ENCODE measurements at regions of chr17 and their contacts with region 1.

Region 1: GRCh38 chr17:77451245-77451893 is 310.6 kb downstream of the SEC14L1 start:
- DNase-seq: no peak
- ATAC-seq: peak; percentile 71
- H3K4me3 ChIP-seq: peak overlapping the region; percentile 94
- H3K27ac ChIP-seq: peak overlapping the region; percentile 99
- H3K4me1 ChIP-seq: peaks cover 50% of the 10 kb centered on the region
- H3K27me3 ChIP-seq: no peaks in the 10 kb centered on the region
- CTCF ChIP-seq: no peak
- EP300 ChIP-seq: no peak
- POLR2A ChIP-seq: peak; percentile 83
- RAD21 ChIP-seq: 0 out of 2 replicates have a peak, but pooled peaks have one; percentile 1

Region 2: GRCh38 chr17:77363821-77364361 is 87.5 kb before region 1 on chr17:
- CTCF ChIA-PET with region 1: no interaction called
- POLR2A ChIA-PET with region 1: no interaction called
- RAD21 ChIA-PET with region 1: no interaction called
- SMC1A ChIA-PET with region 1: no interaction called
- in situ Hi-C with region 1: no loop called
- intact Hi-C with region 1: no loop called
- DNase-seq: no peak
- ATAC-seq: no peak
- H3K4me3 ChIP-seq: no peak overlapping the region
- H3K27ac ChIP-seq: no peak overlapping the region
- H3K4me1 ChIP-seq: peaks cover 18% of the 10 kb centered on the region
- H3K27me3 ChIP-seq: no peaks in the 10 kb centered on the region
- CTCF ChIP-seq: no peak
- EP300 ChIP-seq: no peak
- POLR2A ChIP-seq: no peak
- RAD21 ChIP-seq: no peak

Region 3: DNA sequence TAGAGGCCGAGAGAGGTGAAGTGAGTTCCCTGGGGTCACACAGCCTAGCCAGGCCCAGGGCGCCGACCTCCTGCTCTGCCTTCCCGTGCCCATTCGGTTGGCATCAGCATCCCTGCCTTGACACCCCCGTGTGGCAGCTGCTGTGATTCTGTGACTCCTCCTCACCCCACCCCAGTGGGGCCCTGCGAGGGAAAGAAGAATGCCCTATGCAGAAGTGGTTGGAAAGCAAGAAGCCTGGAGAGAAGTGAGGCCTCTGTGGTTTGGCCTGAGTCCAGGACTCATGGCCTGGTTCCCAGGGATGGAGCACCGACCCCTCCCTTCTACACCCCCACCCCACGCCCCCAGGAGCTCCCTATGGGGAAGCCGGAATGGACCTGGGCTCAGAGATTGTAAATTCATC is 14.4 kb before region 1 on chr17:
- CTCF ChIA-PET with region 1: interaction called, 11 read pairs
- POLR2A ChIA-PET with region 1: interaction called, 78 read pairs
- RAD21 ChIA-PET with region 1: interaction called, 102 read pairs
- SMC1A ChIA-PET with region 1: interaction called, 46 read pairs
- in situ Hi-C with region 1: no loop called
- intact Hi-C with region 1: no loop called
- DNase-seq: no peak
- ATAC-seq: no peak
- H3K4me3 ChIP-seq: no peak overlapping the region
- H3K27ac ChIP-seq: peak overlapping the region; percentile 59; the same call in 1 of the 2 replicates
- H3K4me1 ChIP-seq: peaks cover 88% of the 10 kb centered on the region
- H3K27me3 ChIP-seq: no peaks in the 10 kb centered on the region
- CTCF ChIP-seq: 0 out of 6 replicates have a peak, but pooled peaks of 1 of the 3 experiments have one; percentile 5
- EP300 ChIP-seq: no peak
- POLR2A ChIP-seq: no peak
- RAD21 ChIP-seq: no peak

Region 4: GRCh38 chr17:77465358-77466041 is 14.1 kb after region 1 on chr17:
- CTCF ChIA-PET with region 1: interaction called, 4 read pairs
- POLR2A ChIA-PET with region 1: interaction called, 41 read pairs
- RAD21 ChIA-PET with region 1: interaction called, 62 read pairs
- SMC1A ChIA-PET with region 1: interaction called, 65 read pairs
- in situ Hi-C with region 1: no loop called
- intact Hi-C with region 1: no loop called
- DNase-seq: peak; percentile 86
- ATAC-seq: peak; percentile 82
- H3K4me3 ChIP-seq: peak overlapping the region; percentile 36; the same call in 1 of the 2 replicates
- H3K27ac ChIP-seq: peak overlapping the region; percentile 85
- H3K4me1 ChIP-seq: peaks cover 63% of the 10 kb centered on the region
- H3K27me3 ChIP-seq: no peaks in the 10 kb centered on the region
- CTCF ChIP-seq: no peak
- EP300 ChIP-seq: peak; percentile 29 to 50; a peak in 2 of 4 replicates
- POLR2A ChIP-seq: peak; percentile 48; the same call in 1 of the 2 replicates
- RAD21 ChIP-seq: no peak

Region 5: GRCh38 chr17:77471984-77472461 is 20.7 kb after region 1 on chr17:
- CTCF ChIA-PET with region 1: interaction called, 10 read pairs
- POLR2A ChIA-PET with region 1: interaction called, 41 read pairs
- RAD21 ChIA-PET with region 1: interaction called, 62 read pairs
- SMC1A ChIA-PET with region 1: interaction called, 96 read pairs
- in situ Hi-C with region 1: no loop called
- intact Hi-C with region 1: loop called (anchors 2 kb)
- DNase-seq: no peak
- ATAC-seq: peak; percentile 34
- H3K4me3 ChIP-seq: peak overlapping the region; percentile 48
- H3K27ac ChIP-seq: peak overlapping the region; percentile 90
- H3K4me1 ChIP-seq: peaks cover 63% of the 10 kb centered on the region
- H3K27me3 ChIP-seq: no peaks in the 10 kb centered on the region
- CTCF ChIP-seq: no peak
- EP300 ChIP-seq: no peak
- POLR2A ChIP-seq: no peak
- RAD21 ChIP-seq: no peak

Region 6: GRCh38 chr17:77542551-77543490 is 91.5 kb after region 1 on chr17:
- CTCF ChIA-PET with region 1: no interaction called
- POLR2A ChIA-PET with region 1: no interaction called
- RAD21 ChIA-PET with region 1: no interaction called
- SMC1A ChIA-PET with region 1: no interaction called
- in situ Hi-C with region 1: no loop called
- intact Hi-C with region 1: no loop called
- DNase-seq: peak; percentile 5
- ATAC-seq: peak; percentile 91
- H3K4me3 ChIP-seq: no peak overlapping the region
- H3K27ac ChIP-seq: no peak overlapping the region
- H3K4me1 ChIP-seq: no peaks in the 10 kb centered on the region
- H3K27me3 ChIP-seq: peaks cover 0 to 1% of the 10 kb centered on the region in 2 experiments; a peak in 2 of 4 replicates
- CTCF ChIP-seq: peak; percentile 84 to 88 (median 86)
- EP300 ChIP-seq: no peak
- POLR2A ChIP-seq: no peak
- RAD21 ChIP-seq: peak; percentile 84

Region 7: DNA sequence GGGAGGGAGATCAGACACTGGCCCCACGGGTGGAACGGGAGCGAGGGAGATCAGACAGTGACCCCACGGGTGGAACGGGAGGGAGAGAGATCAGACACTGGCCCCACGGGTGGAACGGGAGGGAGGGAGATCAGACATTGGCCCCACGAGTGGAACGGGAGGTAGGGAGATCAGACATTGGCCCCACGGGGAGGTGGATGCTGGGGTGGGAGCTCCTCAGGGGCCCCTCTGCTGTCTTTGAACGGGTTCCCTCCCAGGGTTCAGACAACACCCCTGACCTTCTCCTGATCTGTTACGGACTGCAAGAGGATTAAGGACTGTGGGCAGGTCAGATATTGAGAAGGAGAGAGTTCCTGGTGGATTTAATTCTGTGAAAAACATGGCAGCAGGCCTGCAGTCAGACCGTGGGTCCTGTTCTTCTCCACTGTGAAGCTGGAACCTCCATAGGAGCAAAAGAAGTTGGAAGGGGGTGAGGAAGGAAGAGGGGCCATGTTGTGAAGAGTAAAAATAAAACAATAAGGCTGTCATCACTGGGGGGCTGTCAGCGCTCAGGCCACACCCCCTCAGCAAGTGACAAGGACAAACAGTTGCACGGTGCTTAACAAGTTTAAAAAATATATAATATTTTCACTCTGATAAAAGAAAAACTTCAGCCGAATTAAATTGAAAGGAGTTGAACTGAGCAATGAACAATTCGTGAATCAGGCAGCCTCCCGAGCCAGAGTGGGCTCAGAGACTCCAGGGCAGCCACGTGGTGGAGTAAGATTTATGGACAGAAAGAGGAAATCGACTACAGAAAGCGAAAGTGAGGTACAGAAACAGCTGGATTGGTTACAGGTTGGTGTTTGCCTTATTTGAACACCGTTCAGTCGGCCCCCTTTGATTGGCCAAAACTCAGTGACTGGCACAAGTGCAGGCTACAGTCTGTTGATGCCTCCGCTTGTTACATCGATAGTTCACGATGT is 158.5 kb after region 1 on chr17:
- CTCF ChIA-PET with region 1: no interaction called
- POLR2A ChIA-PET with region 1: no interaction called
- RAD21 ChIA-PET with region 1: no interaction called
- SMC1A ChIA-PET with region 1: no interaction called
- in situ Hi-C with region 1: no loop called
- intact Hi-C with region 1: no loop called
- DNase-seq: peak; percentile 43
- ATAC-seq: peak; percentile 90
- H3K4me3 ChIP-seq: no peak overlapping the region
- H3K27ac ChIP-seq: no peak overlapping the region
- H3K4me1 ChIP-seq: peaks cover 7% of the 10 kb centered on the region
- H3K27me3 ChIP-seq: no peaks in the 10 kb centered on the region
- CTCF ChIP-seq: no peak
- EP300 ChIP-seq: no peak
- POLR2A ChIP-seq: no peak
- RAD21 ChIP-seq: no peak

Region 8: DNA sequence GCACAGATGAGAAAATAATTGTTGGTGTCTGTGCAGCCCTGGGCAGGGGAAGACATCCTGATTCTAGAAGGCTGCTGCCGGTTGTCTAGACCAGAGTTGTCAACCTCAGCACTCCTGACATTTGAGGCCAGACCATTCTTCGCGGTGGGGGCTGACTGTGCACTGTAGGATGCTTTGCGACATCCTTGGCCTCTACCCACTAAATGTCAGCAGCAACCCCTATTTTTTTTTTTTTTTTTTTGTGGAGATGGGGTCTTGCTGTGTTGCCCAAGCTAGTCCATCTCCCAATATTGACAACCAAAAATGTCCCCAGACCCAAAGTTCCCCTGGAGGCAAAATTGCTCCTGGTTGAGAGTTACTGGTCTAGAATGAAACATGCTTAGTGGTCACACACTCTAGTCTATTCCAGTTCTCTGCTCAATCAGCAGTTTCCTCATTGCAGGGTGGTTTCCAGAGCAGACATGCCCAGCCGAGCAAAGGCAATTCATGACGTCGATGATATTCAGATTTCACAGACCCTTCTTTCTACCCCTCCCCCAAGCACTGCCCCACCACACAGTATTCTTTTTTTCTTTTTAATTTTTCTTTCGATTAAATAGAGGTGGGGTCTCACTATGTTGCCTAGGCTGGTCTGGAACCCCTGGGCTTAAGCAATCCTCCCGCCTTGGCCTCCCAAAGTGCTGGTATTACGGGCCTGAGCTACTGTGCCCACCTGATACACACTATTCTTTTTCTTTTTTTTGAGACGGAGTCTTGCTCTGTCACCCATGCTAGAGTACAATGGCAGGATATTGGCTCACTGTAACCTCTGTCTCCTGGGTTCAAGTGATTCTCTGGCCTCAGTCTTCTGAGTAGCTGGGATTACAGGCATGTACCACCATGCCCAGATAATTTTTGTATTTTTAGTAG is 703.8 kb after region 1 on chr17:
- CTCF ChIA-PET with region 1: no interaction called
- POLR2A ChIA-PET with region 1: no interaction called
- RAD21 ChIA-PET with region 1: no interaction called
- SMC1A ChIA-PET with region 1: no interaction called
- in situ Hi-C with region 1: loop called (anchors 10 kb)
- intact Hi-C with region 1: loop called (anchors 10 kb)
- DNase-seq: peak; percentile 97
- ATAC-seq: peak; percentile 80
- H3K4me3 ChIP-seq: no peak overlapping the region
- H3K27ac ChIP-seq: peak overlapping the region; percentile 93
- H3K4me1 ChIP-seq: peaks cover 64% of the 10 kb centered on the region
- H3K27me3 ChIP-seq: no peaks in the 10 kb centered on the region
- CTCF ChIP-seq: no peak
- EP300 ChIP-seq: peak; percentile 61 to 88; a peak in 3 of 4 replicates
- POLR2A ChIP-seq: peak; percentile 76
- RAD21 ChIP-seq: no peak

Measured in GM12878 (cell line).